Activated naive CD4-positive, alpha-beta T cell treated with anti-CD3 and anti-CD28 coated beads for 36 hours (primary cell): ENCODE measurements at regions of chr1 and their contacts with region 1.

Region 1: GRCh38 chr1:9128520-9129265 is at the start of gene GPR157:
- DNase-seq: peak; percentile 84
- H3K4me3 Mint-ChIP-seq: peak within 1 kb of the TSS; percentile 91
- H3K27ac Mint-ChIP-seq: no peak within 1 kb of the TSS
- H3K4me1 Mint-ChIP-seq: peaks cover 34% of the 10 kb centered on the region
- H3K27me3 Mint-ChIP-seq: no peaks in the 10 kb centered on the region
- total RNA-seq, gene GPR157: 0.94 to 2.3 TPM

Region 2: DNA sequence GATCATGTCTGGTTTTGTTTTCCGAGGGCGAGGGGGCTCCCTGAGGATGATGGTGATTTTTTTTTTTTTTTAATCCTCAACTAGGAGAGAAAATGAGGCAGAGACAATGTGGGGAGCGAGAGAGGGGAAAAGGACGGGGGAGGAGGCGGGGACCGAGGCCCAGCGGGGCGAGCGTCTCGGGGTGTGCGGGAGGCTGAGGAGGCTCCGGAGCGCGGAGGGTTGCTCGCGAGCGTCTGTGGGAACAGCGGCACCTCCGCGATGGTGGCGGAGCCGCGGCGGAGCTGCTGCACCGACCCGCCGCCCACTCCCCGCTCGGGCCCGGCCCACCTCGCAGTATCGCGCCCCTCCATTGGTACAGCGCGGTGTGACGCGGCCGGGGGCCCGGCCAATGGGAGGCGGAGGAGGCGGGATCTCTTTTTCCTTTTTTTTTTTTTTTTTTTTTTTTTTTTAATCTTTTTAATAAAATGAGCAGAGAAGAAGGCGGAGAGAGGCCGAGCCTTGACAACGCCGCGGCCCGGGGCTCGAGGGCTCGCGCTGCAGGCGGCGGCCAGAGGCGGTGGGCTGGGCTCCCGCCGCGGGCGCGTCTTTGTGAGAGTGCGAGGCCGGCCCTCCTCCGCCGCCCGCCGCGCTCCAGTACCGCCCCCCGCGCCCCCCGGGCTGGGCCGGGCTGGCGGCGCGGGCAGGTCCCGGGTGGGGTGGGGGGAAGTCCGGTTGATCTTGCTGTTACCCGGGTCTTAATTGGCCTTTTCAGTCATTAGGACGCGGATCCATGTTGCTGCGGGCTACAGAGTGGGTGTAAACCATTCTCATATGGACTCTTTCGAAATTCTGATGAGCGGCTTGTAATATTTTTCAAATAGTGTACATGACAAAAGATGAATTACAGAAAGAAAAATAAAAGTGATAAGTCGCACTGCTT is 311.0 kb before region 1 on chr1 and contains the start of gene RERE:
- CTCF ChIA-PET with region 1: no interaction called
- intact Hi-C with region 1: loop called (anchors 10 kb)
- DNase-seq: peak; percentile 94
- H3K4me3 Mint-ChIP-seq: peak within 1 kb of the TSS; percentile 86
- H3K27ac Mint-ChIP-seq: peak within 1 kb of the TSS; percentile 93
- H3K4me1 Mint-ChIP-seq: peaks cover 45% of the 10 kb centered on the region
- H3K27me3 Mint-ChIP-seq: no peaks in the 10 kb centered on the region
- total RNA-seq, gene RERE: 46.4 to 47.6 TPM

Region 3: GRCh38 chr1:8889925-8890785 is 238.5 kb before region 1 on chr1:
- CTCF ChIA-PET with region 1: no interaction called
- intact Hi-C with region 1: no loop called
- DNase-seq: no peak
- H3K4me3 Mint-ChIP-seq: no peak overlapping the region
- H3K27ac Mint-ChIP-seq: no peak overlapping the region
- H3K4me1 Mint-ChIP-seq: peaks cover 7% of the 10 kb centered on the region
- H3K27me3 Mint-ChIP-seq: no peaks in the 10 kb centered on the region